ENCODE measurements at regions of chr4 and their contacts with region 1.

Region 1: DNA sequence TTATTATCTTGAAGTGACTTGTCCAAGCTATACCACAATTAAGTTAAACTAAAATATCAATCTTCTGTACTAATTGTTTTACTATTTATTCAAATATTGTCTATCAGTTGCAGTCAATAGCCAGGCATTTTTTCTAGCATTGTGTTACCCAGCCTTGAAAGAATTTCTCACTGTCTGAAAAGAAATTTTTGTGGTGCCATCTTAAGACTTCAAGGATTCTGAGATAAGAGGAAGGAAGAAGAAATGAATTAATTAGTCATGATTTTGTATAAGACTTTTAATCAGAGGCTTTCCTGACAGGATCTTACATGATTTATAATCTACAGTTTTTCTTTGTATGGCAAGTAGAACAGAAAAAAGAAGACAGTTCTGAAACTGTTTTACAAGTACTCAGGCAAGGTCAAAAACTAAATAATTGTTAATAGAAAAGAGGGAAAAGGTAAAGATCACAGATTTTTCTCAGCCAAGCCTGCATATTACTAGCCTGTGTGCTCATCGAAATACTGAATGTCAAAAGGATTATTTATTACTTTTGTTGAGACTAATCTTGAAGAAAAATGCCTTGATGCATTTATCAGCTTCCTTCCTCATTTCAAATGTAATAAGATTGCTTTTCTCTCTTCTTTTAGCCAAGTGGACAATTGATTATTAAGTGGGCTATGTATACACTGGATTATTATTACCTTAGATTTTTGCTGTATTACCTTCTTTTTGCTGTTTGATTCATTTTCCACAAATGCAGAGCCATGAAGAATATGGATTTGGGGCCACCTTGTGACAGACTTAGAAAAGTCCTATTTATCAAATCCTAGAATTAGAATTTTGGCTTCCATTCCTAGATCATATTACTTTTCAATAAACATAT is 53.8 kb downstream of the CXCL1 start:
- DNase-seq: peak in 1 of 4 experiments; percentile 36
- ATAC-seq: no peak
- H3K4me3 ChIP-seq: no peak overlapping the region
- H3K27ac ChIP-seq: no peak overlapping the region
- H3K4me1 ChIP-seq: no peaks in the 10 kb centered on the region; a peak in 1 of 5 replicates
- H3K27me3 ChIP-seq: no peaks in the 10 kb centered on the region
- CTCF ChIP-seq: peak in 1 of 3 experiments; percentile 58; a peak in 3 of 6 replicates
- EP300 ChIP-seq: no peak
- POLR2A ChIP-seq: no peak
- RAD21 ChIP-seq: peak; percentile 61 to 76

Region 2: DNA sequence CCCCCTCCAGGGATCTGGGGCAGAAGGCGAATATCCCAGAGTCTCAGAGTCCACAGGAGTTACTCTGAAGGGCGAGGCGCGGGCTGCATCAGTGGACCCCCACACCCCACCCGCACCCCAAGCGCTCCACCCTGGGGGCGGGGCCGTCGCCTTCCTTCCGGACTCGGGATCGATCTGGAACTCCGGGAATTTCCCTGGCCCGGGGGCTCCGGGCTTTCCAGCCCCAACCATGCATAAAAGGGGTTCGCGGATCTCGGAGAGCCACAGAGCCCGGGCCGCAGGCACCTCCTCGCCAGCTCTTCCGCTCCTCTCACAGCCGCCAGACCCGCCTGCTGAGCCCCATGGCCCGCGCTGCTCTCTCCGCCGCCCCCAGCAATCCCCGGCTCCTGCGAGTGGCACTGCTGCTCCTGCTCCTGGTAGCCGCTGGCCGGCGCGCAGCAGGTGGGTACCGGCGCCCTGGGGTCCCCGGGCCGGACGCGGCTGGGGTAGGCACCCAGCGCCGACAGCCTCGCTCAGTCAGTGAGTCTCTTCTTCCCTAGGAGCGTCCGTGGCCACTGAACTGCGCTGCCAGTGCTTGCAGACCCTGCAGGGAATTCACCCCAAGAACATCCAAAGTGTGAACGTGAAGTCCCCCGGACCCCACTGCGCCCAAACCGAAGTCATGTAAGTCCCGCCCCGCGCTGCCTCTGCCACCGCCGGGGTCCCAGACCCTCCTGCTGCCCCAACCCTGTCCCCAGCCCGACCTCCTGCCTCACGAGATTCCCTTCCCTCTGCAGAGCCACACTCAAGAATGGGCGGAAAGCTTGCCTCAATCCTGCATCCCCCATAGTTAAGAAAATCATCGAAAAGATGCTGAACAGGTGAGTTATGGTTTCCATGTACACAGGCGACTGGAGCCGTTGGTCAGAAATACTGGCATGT is 53.6 kb before region 1 on chr4 and contains the start of gene CXCL1:
- CTCF ChIA-PET with region 1: no interaction called
- POLR2A ChIA-PET with region 1: no interaction called
- in situ Hi-C with region 1: no loop called
- intact Hi-C with region 1: loop called (anchors 2 kb)
- DNase-seq: peak; percentile 37 to 68 (median 51)
- ATAC-seq: peak; percentile 95
- H3K4me3 ChIP-seq: peak within 1 kb of the TSS; percentile 54
- H3K27ac ChIP-seq: no peak within 1 kb of the TSS
- H3K4me1 ChIP-seq: peaks cover 9 to 11% of the 10 kb centered on the region in 2 experiments; a peak in 4 of 5 replicates
- H3K27me3 ChIP-seq: no peaks in the 10 kb centered on the region
- CTCF ChIP-seq: peak in 2 of 3 experiments; percentile 49 to 69; a peak in 4 of 6 replicates
- EP300 ChIP-seq: no peak
- POLR2A ChIP-seq: no peak
- RAD21 ChIP-seq: peak in 1 of 2 experiments; percentile 32
- polyA plus RNA-seq, gene CXCL1: 0.07 TPM in 1 of 2 experiments, not detected in the other

Region 3: DNA sequence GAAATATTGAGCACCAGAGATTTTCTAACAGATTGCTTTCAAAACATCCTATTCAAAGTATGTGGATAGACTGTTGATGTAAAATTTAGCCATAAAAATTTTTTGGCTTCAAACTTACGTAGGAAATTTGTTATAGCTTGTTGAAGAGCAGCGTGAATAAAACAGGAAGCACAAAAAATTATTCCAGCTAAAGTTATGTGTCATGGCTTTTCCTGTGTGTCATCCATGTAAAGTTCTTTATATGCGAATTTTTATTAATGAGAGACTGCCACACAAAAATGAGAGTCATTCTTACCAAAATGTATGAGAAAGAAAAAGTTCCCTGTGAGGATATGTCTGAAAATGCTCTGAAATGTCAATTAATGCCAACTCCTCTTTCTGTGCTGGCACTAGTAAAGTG is 404.8 kb after region 1 on chr4:
- CTCF ChIA-PET with region 1: no interaction called
- POLR2A ChIA-PET with region 1: no interaction called
- in situ Hi-C with region 1: no loop called
- intact Hi-C with region 1: no loop called
- DNase-seq: no peak
- ATAC-seq: no peak
- H3K4me3 ChIP-seq: peak overlapping the region; percentile 36
- H3K27ac ChIP-seq: peak overlapping the region; percentile 83
- H3K4me1 ChIP-seq: peaks cover 0 to 36% of the 10 kb centered on the region in 2 experiments; a peak in 3 of 5 replicates
- H3K27me3 ChIP-seq: no peaks in the 10 kb centered on the region
- CTCF ChIP-seq: no peak
- EP300 ChIP-seq: no peak
- POLR2A ChIP-seq: no peak
- RAD21 ChIP-seq: no peak

Region 4: GRCh38 chr4:75030733-75031132 is 1107.7 kb after region 1 on chr4:
- CTCF ChIA-PET with region 1: no interaction called
- POLR2A ChIA-PET with region 1: no interaction called
- in situ Hi-C with region 1: no loop called
- intact Hi-C with region 1: no loop called
- DNase-seq: no peak
- ATAC-seq: no peak
- H3K4me3 ChIP-seq: no peak overlapping the region
- H3K27ac ChIP-seq: no peak overlapping the region
- H3K4me1 ChIP-seq: no peaks in the 10 kb centered on the region
- H3K27me3 ChIP-seq: peaks cover 3 to 9% of the 10 kb centered on the region in 2 experiments; a peak in 2 of 5 replicates
- CTCF ChIP-seq: no peak
- EP300 ChIP-seq: no peak
- POLR2A ChIP-seq: no peak
- RAD21 ChIP-seq: no peak